ENCODE measurements at regions of chr19 and their contacts with region 1.

Region 1: GRCh38 chr19:7376151-7376852 is 27.6 kb downstream of the ARHGEF18 start:
- DNase-seq: no peak
- H3K4me3 ChIP-seq: no peak overlapping the region
- H3K4me3 Mint-ChIP-seq: no peak overlapping the region
- H3K27ac ChIP-seq: no peak overlapping the region
- H3K27ac Mint-ChIP-seq: peak overlapping the region in 1 of 7 donors; percentile 64
- H3K4me1 ChIP-seq: peaks cover 4% of the 10 kb centered on the region
- H3K4me1 Mint-ChIP-seq: peaks cover 6 to 24% (median 7%) of the 10 kb centered on the region in 4 donors
- H3K27me3 ChIP-seq: no peaks in the 10 kb centered on the region
- H3K27me3 Mint-ChIP-seq: no peaks in the 10 kb centered on the region

Region 2: GRCh38 chr19:7326105-7326877 is 50.0 kb before region 1 on chr19:
- CTCF ChIA-PET with region 1: no interaction called
- POLR2A ChIA-PET with region 1: no interaction called
- intact Hi-C with region 1: loop called (anchors 1 kb)
- DNase-seq: peak in 2 of 5 donors; percentile 24 to 37
- H3K4me3 ChIP-seq: no peak overlapping the region
- H3K4me3 Mint-ChIP-seq: no peak overlapping the region
- H3K27ac ChIP-seq: no peak overlapping the region
- H3K27ac Mint-ChIP-seq: no peak overlapping the region
- H3K4me1 ChIP-seq: no peaks in the 10 kb centered on the region
- H3K4me1 Mint-ChIP-seq: no peaks in the 10 kb centered on the region
- H3K27me3 ChIP-seq: no peaks in the 10 kb centered on the region
- H3K27me3 Mint-ChIP-seq: peaks cover 1 to 2% of the 10 kb centered on the region in 2 donors

Measured in CD4-positive, alpha-beta memory T cell (primary cell).